IMR-90 (cell line): ENCODE measurements at regions of chr1 and their contacts with region 1.

Region 1: GRCh38 chr1:93814059-93814794 is 64.8 kb downstream of the DNTTIP2 start:
- DNase-seq: peak; percentile 84
- ATAC-seq: peak; percentile 88
- H3K4me3 ChIP-seq: no peak overlapping the region
- H3K27ac ChIP-seq: no peak overlapping the region
- H3K4me1 ChIP-seq: peaks cover 10% of the 10 kb centered on the region
- H3K27me3 ChIP-seq: no peaks in the 10 kb centered on the region
- CTCF ChIP-seq: peak; percentile 99
- POLR2A ChIP-seq: peak; percentile 63; the same call in 1 of the 2 replicates
- RAD21 ChIP-seq: peak; percentile 100

Region 2: GRCh38 chr1:93437976-93438605 is 376.1 kb before region 1 on chr1:
- CTCF ChIA-PET with region 1: interaction called, 4 read pairs
- POLR2A ChIA-PET with region 1: no interaction called
- dilution Hi-C with region 1: no loop called
- in situ Hi-C with region 1: no loop called
- intact Hi-C with region 1: loop called (anchors 1 kb)
- DNase-seq: peak; percentile 65
- ATAC-seq: peak; percentile 82
- H3K4me3 ChIP-seq: no peak overlapping the region
- H3K27ac ChIP-seq: no peak overlapping the region
- H3K4me1 ChIP-seq: no peaks in the 10 kb centered on the region
- H3K27me3 ChIP-seq: peaks cover 17% of the 10 kb centered on the region
- CTCF ChIP-seq: peak; percentile 78
- POLR2A ChIP-seq: no peak
- RAD21 ChIP-seq: peak; percentile 81

Region 3: DNA sequence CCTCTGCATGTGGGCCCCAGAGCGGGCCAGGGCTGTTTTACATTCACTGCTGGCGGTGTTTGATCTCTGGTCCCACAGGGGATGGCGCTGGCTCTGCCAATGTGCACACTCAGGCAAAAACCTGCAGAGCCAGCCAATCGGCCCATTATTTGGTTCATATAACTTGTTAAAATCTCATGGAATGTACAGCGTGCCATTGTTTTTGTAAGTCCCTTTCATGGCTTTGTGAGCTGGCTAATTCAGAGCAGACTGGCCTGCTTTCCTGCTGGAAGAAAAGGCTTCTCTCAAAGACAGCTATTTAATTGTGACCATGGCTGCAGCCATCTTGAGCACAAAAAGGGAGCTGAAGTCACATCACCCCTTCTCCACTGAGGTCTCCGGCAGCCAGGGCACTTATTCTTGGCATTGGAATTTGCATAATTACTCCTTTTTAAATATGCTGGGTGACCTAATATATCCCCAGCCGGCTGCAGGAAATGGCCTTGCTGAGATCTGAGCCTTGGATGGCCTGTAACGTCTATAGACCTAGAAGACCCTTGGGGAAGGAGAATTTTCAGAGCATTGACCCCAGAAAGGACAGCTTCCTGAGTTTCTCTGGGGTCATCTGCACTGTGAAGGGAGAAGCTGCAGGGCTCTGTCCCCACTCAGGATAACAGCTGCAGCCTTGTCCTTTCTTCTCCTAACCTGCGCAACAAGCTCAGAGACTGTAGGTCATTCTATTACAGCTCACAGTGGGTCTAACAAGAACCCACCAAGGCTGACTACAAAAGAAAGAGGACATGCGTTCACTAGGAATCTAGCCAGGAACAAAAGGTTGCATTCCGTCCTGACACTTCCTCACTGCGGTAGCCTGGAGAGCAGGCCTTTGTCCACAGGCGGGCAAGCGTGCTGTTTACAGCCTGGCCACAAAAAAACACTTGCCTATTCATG is 178.3 kb before region 1 on chr1:
- CTCF ChIA-PET with region 1: interaction called, 20 read pairs
- POLR2A ChIA-PET with region 1: interaction called, 4 read pairs
- dilution Hi-C with region 1: no loop called
- in situ Hi-C with region 1: loop called (anchors 5 kb)
- intact Hi-C with region 1: no loop called
- DNase-seq: no peak
- ATAC-seq: no peak
- H3K4me3 ChIP-seq: no peak overlapping the region
- H3K27ac ChIP-seq: no peak overlapping the region
- H3K4me1 ChIP-seq: peaks cover 2% of the 10 kb centered on the region
- H3K27me3 ChIP-seq: no peaks in the 10 kb centered on the region
- CTCF ChIP-seq: no peak
- POLR2A ChIP-seq: no peak
- RAD21 ChIP-seq: no peak

Region 4: GRCh38 chr1:93680757-93681550 is 133.3 kb before region 1 on chr1:
- CTCF ChIA-PET with region 1: interaction called, 6 read pairs
- POLR2A ChIA-PET with region 1: no interaction called
- dilution Hi-C with region 1: no loop called
- in situ Hi-C with region 1: no loop called
- intact Hi-C with region 1: loop called (anchors 1 kb)
- DNase-seq: peak; percentile 89
- ATAC-seq: peak; percentile 75
- H3K4me3 ChIP-seq: peak overlapping the region; percentile 57
- H3K27ac ChIP-seq: peak overlapping the region; percentile 67
- H3K4me1 ChIP-seq: peaks cover 21% of the 10 kb centered on the region
- H3K27me3 ChIP-seq: no peaks in the 10 kb centered on the region
- CTCF ChIP-seq: peak; percentile 62
- POLR2A ChIP-seq: no peak
- RAD21 ChIP-seq: peak; percentile 66